ENCODE measurements at regions of chr2 and their contacts with region 1.

Region 1: DNA sequence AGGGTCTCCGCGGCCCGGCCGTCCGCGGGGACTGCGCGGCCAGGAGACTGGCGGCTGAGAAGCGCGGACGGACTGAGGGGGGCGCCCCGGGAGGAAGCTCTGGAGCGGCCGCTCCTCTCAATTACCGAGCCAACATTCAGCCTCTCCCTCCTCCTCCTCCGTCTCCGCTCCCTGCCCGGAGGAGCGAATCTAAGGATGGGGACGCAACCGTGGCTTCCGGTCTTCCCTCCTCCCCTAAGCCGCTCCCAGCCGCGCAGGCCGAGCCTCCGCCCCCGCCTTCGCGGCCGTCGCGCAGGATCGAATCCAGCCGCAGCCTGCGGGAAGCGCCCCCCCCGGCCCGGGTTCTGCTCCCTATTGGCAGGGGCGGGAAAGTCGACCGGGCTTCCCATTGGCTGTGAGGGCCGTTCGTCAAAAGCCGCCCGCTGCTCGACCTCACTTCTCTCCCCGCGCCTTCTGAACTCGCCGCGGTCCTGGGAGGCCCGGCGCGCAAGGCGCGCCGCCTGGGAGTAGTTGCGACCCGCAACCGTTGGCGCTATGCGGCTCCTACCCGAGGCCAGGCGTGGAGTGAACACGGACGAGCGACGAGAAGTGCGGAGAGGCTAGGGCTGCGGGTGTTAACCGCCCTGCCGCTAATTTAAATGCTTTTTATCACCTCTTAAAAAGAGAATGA is at the start of gene HNRNPLL:
- DNase-seq: peak; percentile 99
- ATAC-seq: peak; percentile 98
- total RNA-seq, gene HNRNPLL: 22.5 TPM

Region 2: DNA sequence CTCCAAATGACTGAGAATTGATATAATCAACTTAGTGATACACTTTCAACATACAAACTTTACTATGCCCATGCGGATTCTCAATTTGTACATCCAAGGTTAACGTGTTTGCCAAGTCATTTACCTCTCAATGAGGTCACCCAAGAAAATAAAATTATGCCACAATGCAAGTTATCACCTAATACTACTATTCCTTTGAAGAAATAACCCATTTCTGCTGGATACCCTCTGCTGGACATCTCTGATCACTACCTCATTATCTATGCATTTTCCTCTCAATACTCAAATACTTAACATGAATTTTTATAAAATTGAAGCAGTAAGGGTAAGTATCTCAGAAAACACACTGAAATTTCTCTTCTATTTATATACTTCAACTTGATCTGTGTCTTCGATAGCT is 12.8 kb before region 1 on chr2:
- intact Hi-C with region 1: no loop called
- DNase-seq: no peak
- ATAC-seq: no peak

Region 3: GRCh38 chr2:38665854-38666555 is 63.1 kb after region 1 on chr2 and contains the start of gene GALM:
- intact Hi-C with region 1: loop called (anchors 2 kb)
- DNase-seq: peak; percentile 88
- ATAC-seq: peak; percentile 96
- total RNA-seq, gene GALM: 15.6 TPM

Region 4: DNA sequence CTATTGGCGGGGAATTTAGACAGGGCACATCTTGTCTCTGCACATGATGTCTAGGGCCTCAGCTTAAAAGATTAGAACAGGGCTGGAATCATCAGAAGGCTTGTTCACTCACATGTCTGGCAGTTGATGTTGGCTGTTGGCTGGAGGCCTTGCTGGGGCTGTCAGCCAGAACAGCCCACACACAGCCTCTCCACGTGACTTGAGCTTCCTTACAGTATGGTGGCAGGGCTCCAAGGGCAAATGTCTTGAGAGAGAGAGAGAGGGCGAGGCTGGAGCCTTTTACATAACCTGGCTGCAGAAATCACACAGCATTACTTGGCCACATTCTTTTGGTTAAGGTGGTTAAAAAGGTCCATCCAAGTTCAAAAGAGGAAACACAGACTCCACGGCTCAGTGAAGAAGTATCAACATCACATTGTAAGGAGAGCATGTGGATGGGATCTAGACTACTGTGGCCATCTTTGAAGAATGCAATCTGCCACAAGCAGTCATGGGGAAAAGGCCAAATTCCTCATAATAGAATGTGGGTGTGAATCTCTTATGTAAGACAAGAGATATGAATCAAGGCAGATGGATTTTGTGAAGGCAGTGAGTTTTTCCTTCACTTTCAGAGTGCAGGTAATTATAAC is 117.9 kb after region 1 on chr2:
- intact Hi-C with region 1: loop called (anchors 2 kb)
- DNase-seq: peak; percentile 85
- ATAC-seq: peak; percentile 83